ENCODE measurements at regions of chr13 and their contacts with region 1.

Region 1: GRCh38 chr13:48739386-48739964 is 85.7 kb downstream of the CYSLTR2 start:
- DNase-seq: no peak
- H3K4me3 ChIP-seq: no peak overlapping the region
- CTCF ChIP-seq: no peak

Region 2: DNA sequence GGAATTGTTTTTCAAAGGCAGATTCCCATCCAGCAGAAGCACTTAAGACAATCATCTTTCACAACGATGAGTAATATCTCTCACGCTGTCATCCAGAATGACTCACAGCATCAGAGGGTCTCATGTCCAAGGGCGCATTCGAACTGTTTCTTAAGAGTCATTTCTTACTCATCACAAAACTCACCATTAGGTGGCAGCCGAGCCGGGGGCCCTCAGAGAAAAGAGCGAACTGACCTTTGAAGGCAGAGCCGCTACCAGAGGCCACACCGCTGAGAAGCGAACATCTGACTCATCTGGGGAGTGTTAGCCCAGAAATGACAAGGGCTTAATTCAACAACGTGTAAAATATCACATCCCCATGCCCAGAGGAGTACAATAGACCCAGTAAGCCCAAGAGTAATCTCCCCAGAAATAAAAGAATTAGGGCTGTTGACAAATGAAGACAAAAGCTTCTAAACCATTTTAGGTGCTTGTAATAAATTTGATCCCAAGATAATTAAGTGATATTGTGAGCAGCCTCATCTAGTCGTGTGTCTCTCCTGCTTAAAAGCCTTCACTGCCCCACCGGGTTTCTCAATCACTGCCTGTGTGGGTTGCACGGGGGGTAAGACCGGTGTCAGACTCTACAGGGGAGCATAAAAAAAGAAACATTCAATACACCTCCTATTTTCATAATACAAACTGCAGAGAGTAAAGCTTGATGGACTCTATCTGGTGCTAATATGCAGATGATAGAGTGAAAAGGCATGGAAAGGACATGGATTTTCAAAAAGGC is 10.4 kb after region 1 on chr13:
- CTCF ChIA-PET with region 1: interaction called, 10 read pairs
- POLR2A ChIA-PET with region 1: no interaction called
- DNase-seq: peak; percentile 82
- H3K4me3 ChIP-seq: no peak overlapping the region
- CTCF ChIP-seq: peak; percentile 60